ENCODE measurements at regions of chr3 and their contacts with region 1.

Region 1: GRCh38 chr3:16048435-16049318 is 125.8 kb upstream of the GALNT15 start:
- DNase-seq: peak; percentile 61
- ATAC-seq: peak; percentile 99
- H3K4me3 ChIP-seq: no peak overlapping the region
- H3K27ac ChIP-seq: no peak overlapping the region
- H3K4me1 ChIP-seq: 0 out of 4 replicates have a peak, but pooled peaks cover 0 to 3% of the 10 kb centered on the region in 2 experiments
- H3K27me3 ChIP-seq: no peaks in the 10 kb centered on the region
- CTCF ChIP-seq: peak; percentile 70 to 97 (median 84)
- POLR2A ChIP-seq: no peak
- RAD21 ChIP-seq: peak; percentile 99

Region 2: DNA sequence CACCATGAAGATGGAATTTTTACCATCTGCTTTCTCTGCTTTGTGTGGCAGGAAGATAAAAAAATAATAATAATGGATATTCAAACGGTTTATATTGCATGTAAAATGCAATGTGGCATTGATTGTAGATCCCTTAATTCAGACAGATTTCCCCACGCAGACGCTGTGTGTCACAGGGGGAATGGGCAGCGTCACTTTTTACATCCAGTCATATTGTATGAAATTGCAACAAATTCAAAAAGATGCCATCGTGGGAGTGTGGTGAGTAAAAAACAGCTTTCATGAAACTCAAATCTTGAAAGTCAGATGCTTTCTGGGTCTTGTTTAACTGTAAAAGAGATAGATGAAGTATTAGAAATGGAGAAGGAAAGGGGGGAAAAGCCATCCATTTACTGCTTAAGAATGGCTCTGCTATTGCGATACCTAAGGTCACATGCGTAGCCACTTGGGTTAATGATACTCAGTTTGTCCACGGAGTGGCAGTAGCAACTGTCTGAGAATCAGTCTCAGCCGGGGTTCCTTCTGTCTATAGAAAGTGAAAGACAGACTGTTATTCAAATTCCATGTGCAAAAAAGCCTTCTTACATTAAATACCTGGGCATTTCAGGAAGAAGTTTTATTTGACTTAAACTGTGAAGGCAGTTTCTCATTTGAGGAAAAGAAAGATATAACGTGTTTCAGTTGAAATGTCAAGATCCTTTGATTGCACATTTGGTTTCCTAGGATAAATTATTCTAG is 418.6 kb before region 1 on chr3:
- CTCF ChIA-PET with region 1: no interaction called
- POLR2A ChIA-PET with region 1: no interaction called
- RAD21 ChIA-PET with region 1: no interaction called
- intact Hi-C with region 1: loop called (anchors 10 kb)
- DNase-seq: peak; percentile 70
- ATAC-seq: peak; percentile 94
- H3K4me3 ChIP-seq: peak overlapping the region; percentile 27 to 29
- H3K27ac ChIP-seq: peak overlapping the region; percentile 2; the same call in 1 of the 2 replicates
- H3K4me1 ChIP-seq: peaks cover 21 to 45% of the 10 kb centered on the region in 2 experiments
- H3K27me3 ChIP-seq: no peaks in the 10 kb centered on the region
- CTCF ChIP-seq: peak; percentile 63 to 83 (median 77)
- POLR2A ChIP-seq: no peak
- RAD21 ChIP-seq: peak; percentile 90

Region 3: DNA sequence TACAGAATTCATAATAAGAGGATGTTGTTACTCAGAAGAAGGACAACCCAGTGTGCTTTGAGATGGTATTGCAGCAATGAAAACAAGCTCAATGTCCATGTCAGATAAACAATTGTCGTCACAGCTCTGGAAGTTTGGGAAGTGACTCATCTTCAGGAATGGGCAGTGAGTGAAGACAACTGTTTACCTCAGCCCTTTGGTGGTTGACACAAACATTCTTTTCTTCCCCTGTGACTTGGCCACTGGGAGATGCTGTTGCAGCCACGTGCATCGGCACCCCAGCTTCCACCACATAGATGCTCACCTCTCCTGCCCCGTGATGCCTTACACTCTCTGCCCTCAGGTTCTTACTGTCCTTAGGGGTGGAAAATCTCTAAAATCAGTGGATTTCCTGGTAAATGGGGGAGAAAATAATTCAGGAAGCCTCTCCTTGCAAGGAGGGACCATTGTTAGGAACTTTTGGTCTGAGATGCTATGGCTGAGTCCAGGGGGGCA is 11.7 kb after region 1 on chr3:
- CTCF ChIA-PET with region 1: interaction called, 27 read pairs
- POLR2A ChIA-PET with region 1: interaction called, 5 read pairs
- RAD21 ChIA-PET with region 1: no interaction called
- intact Hi-C with region 1: no loop called
- DNase-seq: peak; percentile 96
- ATAC-seq: peak; percentile 91
- H3K4me3 ChIP-seq: peak overlapping the region in 1 of 2 experiments; percentile 16; a peak in 1 of 4 replicates
- H3K27ac ChIP-seq: peak overlapping the region; percentile 48
- H3K4me1 ChIP-seq: peaks cover 20 to 40% of the 10 kb centered on the region in 2 experiments
- H3K27me3 ChIP-seq: no peaks in the 10 kb centered on the region
- CTCF ChIP-seq: peak; percentile 21 to 55 (median 42); a peak in 4 of 6 replicates
- POLR2A ChIP-seq: no peak
- RAD21 ChIP-seq: peak; percentile 58

Region 4: GRCh38 chr3:16177962-16178627 is 129.4 kb after region 1 on chr3:
- CTCF ChIA-PET with region 1: interaction called, 65 read pairs
- POLR2A ChIA-PET with region 1: no interaction called
- RAD21 ChIA-PET with region 1: interaction called, 7 to 11 read pairs
- intact Hi-C with region 1: loop called (anchors 1 kb)
- DNase-seq: peak; percentile 38
- ATAC-seq: peak; percentile 97
- H3K4me3 ChIP-seq: no peak overlapping the region
- H3K27ac ChIP-seq: no peak overlapping the region
- H3K4me1 ChIP-seq: peaks cover 0 to 9% of the 10 kb centered on the region in 2 experiments; a peak in 1 of 4 replicates
- H3K27me3 ChIP-seq: no peaks in the 10 kb centered on the region
- CTCF ChIP-seq: peak; percentile 88 to 98 (median 96)
- POLR2A ChIP-seq: no peak
- RAD21 ChIP-seq: peak; percentile 98

Region 5: DNA sequence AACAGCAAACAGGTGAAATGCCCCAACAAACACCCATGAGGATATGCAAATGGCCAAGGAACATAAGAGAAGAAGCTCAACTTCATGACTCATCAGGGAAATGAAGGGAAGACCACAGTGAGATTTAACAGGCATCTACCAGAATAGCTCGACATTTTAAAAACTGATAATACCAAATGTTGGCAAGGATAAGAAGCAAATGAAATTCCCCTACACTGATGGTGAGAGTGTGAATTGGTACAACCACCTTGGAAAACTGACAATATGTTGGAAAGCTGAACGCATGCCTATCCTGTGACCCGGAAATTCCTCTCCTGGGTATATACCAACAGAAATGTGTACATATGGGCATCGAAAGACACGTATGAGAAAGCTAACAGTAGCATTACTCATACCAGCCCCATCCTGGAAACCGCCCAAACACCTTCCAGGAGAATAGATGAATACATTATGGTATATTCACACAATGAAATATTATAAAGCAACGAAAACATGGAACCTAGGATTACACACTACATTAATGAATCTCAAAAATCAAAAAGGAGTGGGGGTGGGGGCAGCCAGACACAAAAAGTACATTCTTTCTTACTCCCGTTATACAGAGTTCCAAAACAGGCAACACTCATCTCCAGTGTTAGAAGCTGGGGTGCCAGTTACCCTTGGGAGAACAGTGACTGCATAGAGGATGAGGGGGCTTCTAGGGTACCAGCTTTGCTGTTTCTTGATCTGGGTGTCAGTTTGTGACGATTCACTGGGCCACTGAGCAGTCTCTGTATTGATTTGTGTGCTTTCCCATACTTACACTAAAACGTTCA is 447.9 kb after region 1 on chr3:
- CTCF ChIA-PET with region 1: no interaction called
- POLR2A ChIA-PET with region 1: no interaction called
- RAD21 ChIA-PET with region 1: no interaction called
- intact Hi-C with region 1: no loop called
- DNase-seq: no peak
- ATAC-seq: no peak
- H3K4me3 ChIP-seq: no peak overlapping the region
- H3K27ac ChIP-seq: no peak overlapping the region
- H3K4me1 ChIP-seq: no peaks in the 10 kb centered on the region
- H3K27me3 ChIP-seq: no peaks in the 10 kb centered on the region
- CTCF ChIP-seq: no peak
- POLR2A ChIP-seq: no peak
- RAD21 ChIP-seq: no peak

Region 6: GRCh38 chr3:16550676-16551341 is 502.1 kb after region 1 on chr3:
- CTCF ChIA-PET with region 1: no interaction called
- POLR2A ChIA-PET with region 1: no interaction called
- RAD21 ChIA-PET with region 1: no interaction called
- intact Hi-C with region 1: loop called (anchors 5 kb)
- DNase-seq: peak; percentile 79
- ATAC-seq: peak; percentile 98
- H3K4me3 ChIP-seq: no peak overlapping the region
- H3K27ac ChIP-seq: no peak overlapping the region
- H3K4me1 ChIP-seq: peaks cover 0 to 3% of the 10 kb centered on the region in 2 experiments; a peak in 1 of 4 replicates
- H3K27me3 ChIP-seq: no peaks in the 10 kb centered on the region; the same call in 1 of the 2 replicates
- CTCF ChIP-seq: peak; percentile 75 to 86 (median 86)
- POLR2A ChIP-seq: no peak
- RAD21 ChIP-seq: peak; percentile 97

Measured in HCT116 (cell line).